ENCODE measurements at regions of chr2 and their contacts with region 1.

Region 1: DNA sequence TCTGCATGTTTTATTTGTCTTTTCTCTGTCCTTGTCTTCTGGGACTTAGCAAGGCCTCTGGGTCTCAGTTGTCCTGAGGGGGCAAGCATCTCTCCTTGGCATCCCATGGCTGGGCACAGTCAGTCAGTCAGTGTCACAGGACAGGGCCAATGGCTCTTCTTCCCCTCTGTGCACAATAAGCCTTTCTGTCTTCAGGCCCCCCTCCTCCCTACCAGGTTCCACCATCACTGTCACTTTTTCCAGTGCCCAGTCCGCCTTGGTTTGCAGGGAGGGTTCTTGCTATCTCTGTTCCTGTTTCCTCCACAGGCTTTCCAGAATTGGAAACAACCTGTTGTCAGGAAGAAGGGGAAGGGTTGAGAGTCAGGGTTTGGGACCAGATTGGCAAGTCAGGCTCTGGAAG is 1.7 kb upstream of the VAMP5 start:
- DNase-seq: no peak
- H3K4me3 ChIP-seq: no peak overlapping the region
- H3K27ac ChIP-seq: peak overlapping the region; percentile 27
- H3K4me1 ChIP-seq: peaks cover 60% of the 10 kb centered on the region
- H3K27me3 ChIP-seq: no peaks in the 10 kb centered on the region
- CTCF ChIP-seq: no peak
- POLR2A ChIP-seq: no peak

Region 2: GRCh38 chr2:85564144-85564563 is 18.3 kb before region 1 on chr2:
- intact Hi-C with region 1: loop called (anchors 1 kb)
- DNase-seq: no peak
- H3K4me3 ChIP-seq: no peak overlapping the region
- H3K27ac ChIP-seq: no peak overlapping the region
- H3K4me1 ChIP-seq: peaks cover 24% of the 10 kb centered on the region
- H3K27me3 ChIP-seq: no peaks in the 10 kb centered on the region
- CTCF ChIP-seq: no peak
- POLR2A ChIP-seq: no peak

Region 3: DNA sequence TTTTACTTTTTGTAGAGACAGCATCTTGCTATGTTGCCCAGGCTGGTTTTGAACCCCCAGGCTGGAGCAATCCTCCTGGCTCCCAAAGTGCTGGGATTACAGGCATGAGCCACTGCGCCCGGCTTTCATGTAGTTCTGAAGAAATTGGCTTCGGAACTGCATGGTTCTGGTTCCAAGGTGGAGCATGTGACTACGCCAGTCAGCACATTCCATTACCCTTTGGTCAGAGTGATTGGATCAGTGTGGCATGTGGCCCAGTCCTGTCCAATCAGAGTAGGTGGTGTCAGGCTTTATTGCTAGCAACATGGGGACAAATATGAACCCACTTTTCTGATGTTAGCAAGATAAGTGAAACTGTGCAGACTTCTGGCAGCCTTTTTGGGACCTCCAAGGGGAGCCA is 155.0 kb after region 1 on chr2:
- intact Hi-C with region 1: no loop called
- DNase-seq: peak in 1 of 2 donors; percentile 95
- H3K4me3 ChIP-seq: no peak overlapping the region
- H3K27ac ChIP-seq: peak overlapping the region; percentile 93
- H3K4me1 ChIP-seq: peaks cover 68% of the 10 kb centered on the region
- H3K27me3 ChIP-seq: no peaks in the 10 kb centered on the region
- CTCF ChIP-seq: no peak
- POLR2A ChIP-seq: no peak

Region 4: DNA sequence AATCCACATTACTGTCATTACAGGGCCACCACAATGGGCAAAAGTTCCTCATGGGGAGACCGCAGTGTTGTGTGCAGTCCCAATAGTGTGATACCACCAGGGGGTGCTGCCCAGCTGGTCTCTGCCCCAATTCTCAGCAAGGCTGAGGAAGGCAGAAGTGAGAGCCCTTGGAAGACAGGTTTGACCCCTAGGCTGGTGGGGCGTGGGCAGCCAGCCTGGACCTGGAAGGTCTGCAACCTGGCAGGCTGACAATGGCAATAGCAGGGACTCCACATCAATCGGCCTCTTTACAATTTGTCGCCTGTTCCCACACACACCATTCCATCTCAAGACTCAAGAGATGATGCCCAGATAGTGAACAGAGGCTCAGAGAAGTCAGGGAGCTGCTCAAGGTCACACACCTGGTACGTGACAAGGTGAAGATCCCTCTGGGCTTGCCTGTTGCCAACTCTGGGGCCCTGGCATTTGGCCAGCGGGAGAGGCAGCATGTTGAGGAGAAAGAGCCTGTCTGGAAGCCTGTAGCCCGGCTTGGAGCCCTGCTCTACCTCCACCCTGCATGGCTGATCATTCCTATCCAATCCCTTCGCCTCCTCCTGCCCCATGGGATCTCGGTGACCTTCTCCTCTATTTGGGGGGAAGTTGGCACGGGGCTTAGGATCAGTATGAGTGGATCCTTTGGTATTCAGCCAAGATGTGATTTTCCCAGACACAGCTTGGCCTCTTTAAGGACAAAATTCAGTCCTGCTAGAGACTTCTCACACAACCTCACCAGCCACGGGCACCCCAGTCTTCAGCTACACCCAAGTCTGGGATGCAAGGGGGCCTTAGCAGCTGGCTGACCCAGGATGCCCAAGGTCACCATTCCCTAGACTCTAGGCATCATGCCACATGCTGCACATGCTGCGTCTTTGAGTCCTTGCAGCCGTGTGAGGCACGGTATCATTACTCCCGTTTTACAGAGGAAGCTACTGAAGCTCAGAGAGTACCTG is 168.4 kb after region 1 on chr2:
- intact Hi-C with region 1: no loop called
- DNase-seq: no peak
- H3K4me3 ChIP-seq: no peak overlapping the region
- H3K27ac ChIP-seq: peak overlapping the region; percentile 42
- H3K4me1 ChIP-seq: peaks cover 64% of the 10 kb centered on the region
- H3K27me3 ChIP-seq: no peaks in the 10 kb centered on the region
- CTCF ChIP-seq: peak; percentile 46 to 70 (median 52)
- POLR2A ChIP-seq: no peak

Measured in vagina (tissue), 2 donors.